Activated naive CD4-positive, alpha-beta T cell treated with anti-CD3 and anti-CD28 coated beads for 36 hours (primary cell): ENCODE measurements at regions of chr7 and their contacts with region 1.

Region 1: DNA sequence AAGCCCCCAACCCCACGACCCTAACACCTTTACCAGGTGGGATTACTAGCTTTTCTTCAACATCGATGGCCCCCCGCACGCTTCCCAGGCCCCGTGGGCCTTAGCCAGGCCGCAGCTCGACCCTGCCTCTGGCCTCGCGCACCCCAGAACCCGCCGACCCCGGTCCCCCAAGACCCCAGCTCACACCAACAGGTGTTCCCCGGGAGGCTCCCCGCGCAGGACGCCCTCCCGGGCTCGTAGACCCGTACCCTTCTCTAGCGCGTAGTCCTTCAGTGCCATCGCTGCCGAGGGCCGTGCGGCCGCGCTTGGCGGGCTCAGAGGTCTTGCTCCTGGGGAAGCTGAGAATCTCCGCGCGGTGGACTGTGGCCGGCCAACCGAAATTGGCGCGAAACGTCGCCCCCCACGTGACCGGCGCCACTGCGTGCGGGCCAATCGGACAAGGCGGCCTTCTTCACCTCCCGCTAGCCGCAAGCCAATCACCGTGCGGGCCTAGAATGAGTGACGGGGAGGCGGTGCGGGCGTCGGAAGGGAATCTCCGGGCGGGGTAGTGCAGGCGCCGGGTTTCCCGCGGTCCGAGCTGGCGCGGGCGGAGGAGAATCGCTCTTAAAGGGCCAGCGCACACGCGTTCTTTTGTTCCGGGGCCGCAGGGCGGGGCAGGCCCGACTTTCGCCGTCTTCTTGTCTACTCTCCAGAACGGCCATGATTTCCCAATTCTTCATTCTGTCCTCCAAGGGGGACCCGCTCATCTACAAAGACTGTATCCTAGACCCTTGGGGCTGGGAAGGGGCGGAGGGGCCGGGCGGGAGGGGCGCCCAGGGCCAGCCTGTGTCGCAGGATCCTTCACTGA is at the starts of genes AP4M1 and MCM7:
- DNase-seq: peak; percentile 98
- H3K4me3 Mint-ChIP-seq: peak within 1 kb of the TSS; percentile 91
- H3K27ac Mint-ChIP-seq: peak within 1 kb of the TSS; percentile 96
- H3K4me1 Mint-ChIP-seq: peaks cover 40% of the 10 kb centered on the region
- H3K27me3 Mint-ChIP-seq: no peaks in the 10 kb centered on the region
- total RNA-seq, gene AP4M1: 12.6 to 12.7 TPM
- total RNA-seq, gene MCM7: 390 to 395 TPM

Region 2: GRCh38 chr7:100003711-100004661 is 97.3 kb before region 1 on chr7:
- CTCF ChIA-PET with region 1: no interaction called
- intact Hi-C with region 1: no loop called
- DNase-seq: no peak
- H3K4me3 Mint-ChIP-seq: no peak overlapping the region
- H3K27ac Mint-ChIP-seq: peak overlapping the region; percentile 56
- H3K4me1 Mint-ChIP-seq: no peaks in the 10 kb centered on the region
- H3K27me3 Mint-ChIP-seq: peaks cover 2% of the 10 kb centered on the region

Region 3: DNA sequence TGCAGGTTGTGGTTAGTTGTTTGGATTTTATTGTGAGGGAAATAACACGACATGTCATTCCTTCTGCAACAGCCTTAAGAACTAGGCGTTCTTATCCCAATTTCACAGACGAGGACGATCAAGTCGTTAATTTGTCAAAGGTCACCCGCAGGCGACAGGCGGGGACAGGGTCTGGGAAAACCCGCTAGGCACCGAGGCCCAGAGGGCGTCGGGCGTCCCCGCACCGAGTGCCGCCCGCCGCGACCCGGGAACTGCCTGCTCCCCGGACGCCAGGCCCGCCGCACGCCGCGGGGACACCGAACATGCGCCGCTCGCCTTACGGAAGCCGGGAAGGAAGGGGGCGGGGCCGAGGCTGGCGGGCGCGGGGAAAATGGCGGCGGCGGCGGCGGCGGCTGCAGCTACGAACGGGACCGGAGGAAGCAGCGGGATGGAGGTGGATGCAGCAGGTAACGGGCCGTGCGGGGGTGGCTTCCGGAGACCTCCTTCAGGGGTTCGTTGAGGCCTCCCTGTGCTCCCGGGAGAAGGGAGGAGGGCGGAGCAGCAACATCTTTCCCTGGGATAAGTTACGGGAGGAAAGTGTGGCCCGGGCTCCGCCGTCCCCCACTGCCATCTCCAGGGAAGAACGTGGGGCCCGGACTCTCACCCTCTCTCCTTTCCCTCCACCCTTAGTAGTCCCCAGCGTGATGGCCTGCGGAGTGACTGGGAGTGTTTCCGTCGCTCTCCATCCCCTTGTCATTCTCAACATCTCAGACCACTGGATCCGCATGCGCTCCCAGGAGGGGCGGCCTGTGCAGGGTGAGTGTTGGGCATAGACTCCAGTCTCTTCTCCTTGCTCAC is 12.4 kb before region 1 on chr7 and contains the start of gene COPS6:
- CTCF ChIA-PET with region 1: interaction called, 4 read pairs
- intact Hi-C with region 1: loop called (anchors 1 kb)
- DNase-seq: peak; percentile 89
- H3K4me3 Mint-ChIP-seq: peak within 1 kb of the TSS; percentile 88
- H3K27ac Mint-ChIP-seq: peak within 1 kb of the TSS; percentile 90
- H3K4me1 Mint-ChIP-seq: peaks cover 36% of the 10 kb centered on the region
- H3K27me3 Mint-ChIP-seq: no peaks in the 10 kb centered on the region
- total RNA-seq, gene COPS6: 97.1 to 97.8 TPM

Region 4: DNA sequence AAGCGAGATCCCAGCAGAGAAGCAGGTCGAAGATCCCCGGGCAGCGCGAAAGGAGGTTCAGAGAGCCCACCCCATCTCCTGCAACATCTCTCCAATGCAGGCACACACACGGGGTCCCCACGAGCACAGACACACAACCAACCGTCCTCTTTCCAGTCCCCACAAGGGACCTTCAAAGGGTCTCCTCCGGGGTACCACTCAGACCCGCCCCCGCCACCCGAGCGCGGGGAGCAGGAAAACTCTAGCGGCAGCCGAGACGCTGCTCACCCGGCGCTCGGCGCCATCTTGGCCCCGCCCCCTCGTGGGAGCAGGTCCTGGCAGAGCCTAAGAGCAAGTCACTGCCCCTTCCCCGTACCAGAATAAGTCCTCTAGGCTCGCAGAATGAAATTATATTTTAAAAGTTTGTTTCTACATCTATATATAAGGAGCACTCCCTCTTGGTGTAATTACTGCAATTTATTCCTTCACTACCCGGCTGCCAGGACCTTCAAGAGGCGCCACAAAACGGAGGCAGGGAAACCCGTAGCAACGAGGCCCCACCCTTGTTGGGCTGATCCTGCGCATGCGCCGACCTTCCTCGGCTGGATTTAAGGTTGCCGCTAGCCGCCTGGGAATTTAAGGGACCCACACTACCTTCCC is 17.9 kb after region 1 on chr7 and contains the starts of genes CNPY4 and TAF6:
- CTCF ChIA-PET with region 1: interaction called, 7 read pairs
- intact Hi-C with region 1: loop called (anchors 1 kb)
- DNase-seq: peak; percentile 96
- H3K4me3 Mint-ChIP-seq: peak within 1 kb of the TSS; percentile 93
- H3K27ac Mint-ChIP-seq: peak within 1 kb of the TSS; percentile 95
- H3K4me1 Mint-ChIP-seq: peaks cover 17% of the 10 kb centered on the region
- H3K27me3 Mint-ChIP-seq: no peaks in the 10 kb centered on the region
- total RNA-seq, gene CNPY4: 7.2 to 8.7 TPM
- total RNA-seq, gene TAF6: 48.9 to 53.5 TPM

Region 5: GRCh38 chr7:100126931-100127865 is 26.0 kb after region 1 on chr7 and contains the start of gene MBLAC1:
- CTCF ChIA-PET with region 1: interaction called, 4 read pairs
- intact Hi-C with region 1: loop called (anchors 1 kb)
- DNase-seq: peak; percentile 94
- H3K4me3 Mint-ChIP-seq: peak within 1 kb of the TSS; percentile 100
- H3K27ac Mint-ChIP-seq: peak within 1 kb of the TSS; percentile 99
- H3K4me1 Mint-ChIP-seq: peaks cover 30% of the 10 kb centered on the region
- H3K27me3 Mint-ChIP-seq: no peaks in the 10 kb centered on the region
- total RNA-seq, gene MBLAC1: 2.3 to 2.9 TPM